Mammary epithelial cell (primary cell): ENCODE measurements at regions of chrX and their contacts with region 1.

Region 1: DNA sequence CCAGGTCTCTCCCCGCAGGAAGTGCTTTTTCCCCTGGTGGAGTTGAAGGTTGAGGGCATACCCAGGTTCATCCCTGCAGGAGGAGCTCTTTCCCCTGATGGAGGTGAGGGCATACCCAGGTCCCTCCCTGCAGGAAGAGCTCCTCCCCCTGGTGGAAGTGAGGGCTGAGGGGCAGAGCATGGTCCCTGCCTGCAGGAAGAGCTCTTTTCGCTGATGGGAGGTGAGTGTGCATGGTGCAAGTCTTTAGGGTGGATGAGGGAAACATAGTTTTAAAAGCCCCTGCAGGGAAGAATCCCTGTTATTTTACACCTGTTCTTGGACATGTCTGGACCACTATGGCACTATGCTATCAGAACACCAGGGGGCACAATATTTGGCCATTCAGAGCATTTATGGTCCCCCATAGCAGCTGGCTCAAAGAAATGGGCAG is 43.7 kb upstream of the PUDP start:
- DNase-seq: no peak
- H3K4me3 ChIP-seq: no peak overlapping the region
- H3K27ac ChIP-seq: no peak overlapping the region
- H3K4me1 ChIP-seq: no peaks in the 10 kb centered on the region
- H3K27me3 ChIP-seq: no peaks in the 10 kb centered on the region
- CTCF ChIP-seq: peak; percentile 22 to 26

Region 2: DNA sequence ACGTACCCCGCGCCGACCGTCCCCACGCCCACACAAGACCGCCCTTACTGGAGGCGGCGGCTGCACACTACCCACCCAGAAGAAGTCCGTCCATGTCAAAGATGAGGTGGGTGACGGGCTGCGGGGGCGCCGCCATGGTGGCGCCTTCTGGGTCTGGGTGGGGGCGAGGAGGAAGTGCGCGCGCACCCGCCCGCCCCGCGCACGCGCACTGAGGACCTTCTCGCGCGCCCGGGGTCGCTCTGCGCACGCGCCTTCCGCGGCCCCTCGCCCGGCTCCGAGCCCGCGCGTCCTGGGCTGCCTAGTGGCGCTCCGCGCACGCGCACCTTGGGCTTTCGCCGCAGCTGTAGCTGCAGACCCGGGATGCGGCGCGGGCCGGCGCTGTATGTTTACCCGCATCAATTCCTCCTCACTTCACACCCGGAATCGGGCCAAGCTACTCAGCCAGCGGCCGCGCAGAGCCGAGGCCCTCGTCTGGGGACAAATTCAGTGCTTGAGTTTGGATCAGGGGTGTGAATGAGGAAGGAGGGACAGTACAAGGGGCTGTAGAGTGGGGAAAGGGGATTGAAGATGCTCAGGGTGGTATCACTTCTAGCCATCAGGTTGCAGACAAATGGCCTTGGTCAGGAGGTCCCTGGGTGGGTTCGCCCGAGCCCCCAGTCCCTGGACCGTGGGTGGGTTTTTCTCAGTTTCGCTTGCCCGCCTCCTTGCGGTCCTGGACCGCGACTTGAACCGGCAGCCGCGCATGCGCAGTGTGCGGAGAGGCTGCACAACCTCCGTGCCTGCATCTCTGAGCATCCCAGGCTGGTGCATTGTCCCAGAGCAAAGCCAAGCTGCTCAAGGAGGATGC is 43.5 kb before region 1 on chrX and contains the start of gene PUDP:
- CTCF ChIA-PET with region 1: no interaction called
- dilution Hi-C with region 1: no loop called
- in situ Hi-C with region 1: no loop called
- intact Hi-C with region 1: no loop called
- DNase-seq: peak; percentile 76
- H3K4me3 ChIP-seq: peak within 1 kb of the TSS; percentile 71 to 97 (median 78)
- H3K27ac ChIP-seq: peak within 1 kb of the TSS; percentile 49
- H3K4me1 ChIP-seq: no peaks in the 10 kb centered on the region
- H3K27me3 ChIP-seq: no peaks in the 10 kb centered on the region
- CTCF ChIP-seq: peak in 1 of 2 donors; percentile 31
- total RNA-seq, gene PUDP: 6.8 to 19.1 TPM

Region 3: GRCh38 chrX:7552758-7553157 is 361.1 kb after region 1 on chrX:
- CTCF ChIA-PET with region 1: no interaction called
- dilution Hi-C with region 1: no loop called
- in situ Hi-C with region 1: no loop called
- intact Hi-C with region 1: loop called (anchors 1 kb)
- DNase-seq: no peak
- H3K4me3 ChIP-seq: no peak overlapping the region
- H3K27ac ChIP-seq: no peak overlapping the region
- H3K4me1 ChIP-seq: no peaks in the 10 kb centered on the region
- H3K27me3 ChIP-seq: no peaks in the 10 kb centered on the region
- CTCF ChIP-seq: peak in 1 of 2 donors; percentile 46

Region 4: DNA sequence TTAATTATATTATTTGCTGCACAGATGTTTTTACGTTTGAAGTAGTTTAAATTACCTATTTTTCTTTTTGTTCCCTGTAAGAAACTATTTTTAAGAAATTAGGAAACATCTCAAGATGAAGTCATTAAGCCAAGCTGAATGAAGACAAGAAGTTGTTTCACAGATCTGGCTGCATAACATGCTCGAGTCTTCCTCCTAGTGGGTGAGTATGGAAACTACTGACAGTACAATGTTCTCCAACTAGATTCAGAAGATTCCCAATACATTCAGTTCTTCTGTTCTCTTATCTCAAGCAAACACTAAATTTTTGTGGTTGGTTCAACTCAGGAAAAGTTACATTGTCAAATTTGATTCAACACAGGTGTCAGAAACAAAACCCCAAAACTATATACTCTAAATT is 394.4 kb after region 1 on chrX:
- CTCF ChIA-PET with region 1: no interaction called
- dilution Hi-C with region 1: no loop called
- in situ Hi-C with region 1: no loop called
- intact Hi-C with region 1: loop called (anchors 2 kb)
- DNase-seq: peak; percentile 16
- H3K4me3 ChIP-seq: no peak overlapping the region
- H3K27ac ChIP-seq: no peak overlapping the region
- H3K4me1 ChIP-seq: no peaks in the 10 kb centered on the region
- H3K27me3 ChIP-seq: peaks cover 2% of the 10 kb centered on the region
- CTCF ChIP-seq: peak; percentile 57 to 71

Region 5: GRCh38 chrX:7706032-7706431 is 514.3 kb after region 1 on chrX:
- CTCF ChIA-PET with region 1: interaction called, 4 read pairs
- dilution Hi-C with region 1: no loop called
- in situ Hi-C with region 1: no loop called
- intact Hi-C with region 1: loop called (anchors 5 kb)
- DNase-seq: no peak
- H3K4me3 ChIP-seq: no peak overlapping the region
- H3K27ac ChIP-seq: no peak overlapping the region
- H3K4me1 ChIP-seq: peaks cover 2% of the 10 kb centered on the region
- H3K27me3 ChIP-seq: no peaks in the 10 kb centered on the region
- CTCF ChIP-seq: peak; percentile 17 to 56